Mammary epithelial cell (primary cell): ENCODE measurements at regions of chr10 and their contacts with region 1.

Region 1: DNA sequence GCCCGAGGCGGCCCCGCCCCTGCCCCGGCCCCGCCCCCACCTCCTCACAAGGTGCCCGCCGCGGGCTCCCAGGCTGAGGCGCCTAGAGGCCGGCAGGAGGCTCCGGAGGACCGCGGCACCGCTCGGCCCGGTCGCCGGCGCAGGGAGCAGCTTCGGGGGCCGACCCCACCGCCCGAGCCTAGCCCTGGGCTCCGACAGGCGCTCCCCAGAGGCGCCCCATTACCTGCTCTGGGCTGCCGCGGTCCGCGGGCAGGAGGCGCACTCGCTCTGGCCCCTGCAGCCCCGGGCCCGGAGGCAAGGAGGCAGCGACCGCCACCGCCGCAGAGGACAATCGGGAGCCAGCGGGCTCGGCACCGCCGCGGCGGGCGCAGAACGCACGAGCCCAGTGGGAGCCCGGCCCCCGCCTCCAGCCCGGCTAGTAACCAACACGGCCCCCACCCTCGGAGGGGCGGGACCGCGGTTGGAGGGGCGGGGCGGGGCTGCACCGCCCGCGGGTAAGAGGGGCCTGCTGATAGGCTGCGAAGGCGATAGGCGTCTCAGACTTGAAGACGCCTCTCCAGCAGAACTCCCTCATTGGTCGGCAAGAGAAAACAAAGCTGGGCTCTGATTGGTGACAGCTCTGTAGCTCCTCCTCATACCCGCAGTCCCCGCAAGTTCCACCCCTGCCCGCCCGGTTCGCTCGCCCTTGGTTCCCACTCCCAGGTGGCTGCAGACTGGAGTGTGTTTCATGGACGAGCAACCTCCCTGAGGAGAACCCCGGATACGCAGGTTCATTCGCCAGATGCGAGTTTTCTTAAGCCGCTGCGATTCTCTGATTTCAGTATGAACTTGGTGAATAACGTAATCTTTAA is at the start of gene MPP7:
- DNase-seq: peak; percentile 99
- H3K4me3 ChIP-seq: peak within 1 kb of the TSS; percentile 72 to 97 (median 84)
- H3K27ac ChIP-seq: peak within 1 kb of the TSS; percentile 53
- H3K4me1 ChIP-seq: peaks cover 8% of the 10 kb centered on the region
- H3K27me3 ChIP-seq: no peaks in the 10 kb centered on the region
- CTCF ChIP-seq: peak in 1 of 2 donors; percentile 40
- total RNA-seq, gene MPP7: 10.0 to 23.0 TPM

Region 2: DNA sequence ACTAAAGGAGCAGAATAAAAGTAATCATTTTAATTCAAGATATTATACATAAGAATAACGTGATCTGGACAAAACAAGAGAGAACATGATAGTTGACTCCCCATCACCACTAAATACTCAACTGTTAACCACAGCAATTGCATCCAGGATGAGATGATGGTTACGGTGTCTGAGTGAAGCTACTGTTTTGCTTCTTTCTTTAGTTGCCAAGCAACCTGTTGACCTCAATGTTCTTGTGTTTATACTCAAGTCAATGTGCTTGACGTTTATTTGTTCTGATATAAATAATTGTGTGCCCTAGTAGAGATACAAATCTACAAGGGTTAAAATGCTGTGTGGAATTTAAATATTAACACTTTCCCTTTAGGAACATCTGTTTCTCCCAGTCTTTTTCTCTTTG is 31.4 kb after region 1 on chr10:
- CTCF ChIA-PET with region 1: no interaction called
- dilution Hi-C with region 1: no loop called
- in situ Hi-C with region 1: no loop called
- intact Hi-C with region 1: loop called (anchors 2 kb)
- DNase-seq: peak; percentile 95
- H3K4me3 ChIP-seq: no peak overlapping the region
- H3K27ac ChIP-seq: peak overlapping the region; percentile 46
- H3K4me1 ChIP-seq: peaks cover 4% of the 10 kb centered on the region
- H3K27me3 ChIP-seq: no peaks in the 10 kb centered on the region
- CTCF ChIP-seq: no peak